AG04450 (cell line): ENCODE measurements at regions of chr5 and their contacts with region 1.

Region 1: DNA sequence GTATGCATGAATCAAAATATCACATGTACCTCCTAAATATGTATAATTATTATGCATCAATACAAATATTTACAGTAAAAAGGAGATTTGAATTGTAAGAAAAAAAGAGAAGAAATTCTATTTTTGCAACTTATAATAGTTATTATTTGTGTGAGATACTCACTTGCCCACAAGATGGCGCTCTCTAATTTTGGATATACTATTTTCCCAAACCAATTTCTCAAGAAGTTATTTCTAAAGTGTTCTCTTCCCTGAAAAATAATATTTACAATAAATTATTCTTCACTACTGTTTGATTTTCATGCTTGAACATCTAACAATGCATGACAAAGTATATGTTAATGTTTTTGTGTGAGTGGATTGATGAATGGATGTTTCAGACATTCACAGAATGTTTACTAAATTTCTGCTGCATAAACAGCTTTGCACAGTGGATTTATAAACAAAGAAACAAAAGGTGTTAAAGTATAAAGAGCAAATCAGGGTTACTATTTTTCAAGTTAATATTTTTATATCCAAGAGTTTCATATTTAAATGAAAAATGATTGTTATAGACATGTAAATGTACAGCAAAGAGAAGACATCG is 503.4 kb downstream of the PDE4D start:
- DNase-seq: no peak
- H3K4me3 ChIP-seq: no peak overlapping the region
- H3K27ac ChIP-seq: no peak overlapping the region
- H3K27me3 ChIP-seq: no peaks in the 10 kb centered on the region
- CTCF ChIP-seq: peak; percentile 67

Region 2: DNA sequence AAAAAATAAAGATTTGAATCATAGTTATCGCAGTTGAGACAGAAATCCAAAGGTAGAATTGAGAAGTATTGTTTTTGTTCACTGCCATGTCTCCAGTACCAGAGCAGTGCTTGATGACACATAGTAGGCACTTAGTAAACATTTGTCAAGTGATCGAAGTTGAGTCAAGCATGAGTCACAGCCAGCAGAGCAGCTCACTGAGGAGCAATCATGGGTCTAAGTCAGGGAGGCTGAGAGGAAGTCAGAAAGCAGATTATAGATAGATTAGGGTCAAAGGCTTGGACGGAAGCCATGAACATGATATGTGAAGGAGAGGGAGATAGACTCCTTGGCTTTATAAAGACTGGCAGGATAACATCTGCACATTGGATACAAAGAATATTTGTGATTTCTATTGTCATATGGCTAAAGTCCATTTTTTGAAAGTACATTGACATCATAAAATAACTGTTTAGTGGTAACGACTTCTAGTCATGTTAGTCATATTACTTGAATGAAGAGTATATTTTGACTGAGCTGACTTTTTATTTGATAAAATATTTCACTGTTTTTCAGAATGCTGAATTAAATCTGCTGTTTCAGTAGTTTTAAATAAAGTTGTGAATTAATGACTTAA is 638.8 kb before region 1 on chr5:
- CTCF ChIA-PET with region 1: no interaction called
- POLR2A ChIA-PET with region 1: no interaction called
- DNase-seq: no peak
- H3K4me3 ChIP-seq: no peak overlapping the region
- H3K27ac ChIP-seq: no peak overlapping the region
- H3K27me3 ChIP-seq: no peaks in the 10 kb centered on the region
- CTCF ChIP-seq: no peak

Region 3: GRCh38 chr5:59152701-59153245 is 237.4 kb before region 1 on chr5:
- CTCF ChIA-PET with region 1: no interaction called
- POLR2A ChIA-PET with region 1: no interaction called
- DNase-seq: no peak
- H3K4me3 ChIP-seq: no peak overlapping the region
- H3K27ac ChIP-seq: no peak overlapping the region
- H3K27me3 ChIP-seq: no peaks in the 10 kb centered on the region
- CTCF ChIP-seq: no peak

Region 4: GRCh38 chr5:59401637-59402036 is 11.5 kb after region 1 on chr5:
- CTCF ChIA-PET with region 1: no interaction called
- POLR2A ChIA-PET with region 1: no interaction called
- DNase-seq: no peak
- H3K4me3 ChIP-seq: no peak overlapping the region
- H3K27ac ChIP-seq: no peak overlapping the region
- H3K27me3 ChIP-seq: no peaks in the 10 kb centered on the region
- CTCF ChIP-seq: no peak

Region 5: DNA sequence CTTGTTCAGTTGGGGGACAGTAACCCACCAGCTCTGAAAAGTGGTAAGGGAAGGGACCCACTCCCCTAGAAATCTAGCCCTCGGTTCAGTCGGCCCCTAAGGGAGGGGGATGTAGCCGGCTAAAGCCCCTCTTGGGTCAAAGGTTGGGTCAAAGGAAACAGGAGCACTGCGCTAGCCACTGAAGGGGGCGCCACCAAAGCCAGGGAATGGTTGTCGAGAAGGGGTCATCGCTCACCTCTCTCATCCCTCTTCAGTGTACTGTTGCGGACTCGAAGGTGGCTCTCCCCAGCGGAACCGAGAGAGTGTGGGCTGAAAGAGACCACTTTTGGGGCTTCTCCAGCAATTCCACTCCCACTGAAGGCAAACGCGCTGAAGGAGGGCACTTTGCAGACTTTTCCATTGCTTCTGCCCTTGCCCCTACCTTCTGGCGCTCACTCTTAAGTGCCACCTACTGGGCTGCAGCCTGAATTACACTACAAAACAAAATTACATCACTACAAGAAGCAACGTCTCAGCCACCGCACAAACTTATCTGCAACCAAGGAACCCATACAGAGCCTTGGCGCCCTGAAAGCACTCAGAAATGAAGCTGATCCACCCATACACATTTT is 106.5 kb after region 1 on chr5:
- CTCF ChIA-PET with region 1: interaction called, 15 read pairs
- POLR2A ChIA-PET with region 1: no interaction called
- DNase-seq: no peak
- H3K4me3 ChIP-seq: no peak overlapping the region
- H3K27ac ChIP-seq: no peak overlapping the region
- H3K27me3 ChIP-seq: peaks cover 2% of the 10 kb centered on the region
- CTCF ChIP-seq: peak; percentile 66

Region 6: DNA sequence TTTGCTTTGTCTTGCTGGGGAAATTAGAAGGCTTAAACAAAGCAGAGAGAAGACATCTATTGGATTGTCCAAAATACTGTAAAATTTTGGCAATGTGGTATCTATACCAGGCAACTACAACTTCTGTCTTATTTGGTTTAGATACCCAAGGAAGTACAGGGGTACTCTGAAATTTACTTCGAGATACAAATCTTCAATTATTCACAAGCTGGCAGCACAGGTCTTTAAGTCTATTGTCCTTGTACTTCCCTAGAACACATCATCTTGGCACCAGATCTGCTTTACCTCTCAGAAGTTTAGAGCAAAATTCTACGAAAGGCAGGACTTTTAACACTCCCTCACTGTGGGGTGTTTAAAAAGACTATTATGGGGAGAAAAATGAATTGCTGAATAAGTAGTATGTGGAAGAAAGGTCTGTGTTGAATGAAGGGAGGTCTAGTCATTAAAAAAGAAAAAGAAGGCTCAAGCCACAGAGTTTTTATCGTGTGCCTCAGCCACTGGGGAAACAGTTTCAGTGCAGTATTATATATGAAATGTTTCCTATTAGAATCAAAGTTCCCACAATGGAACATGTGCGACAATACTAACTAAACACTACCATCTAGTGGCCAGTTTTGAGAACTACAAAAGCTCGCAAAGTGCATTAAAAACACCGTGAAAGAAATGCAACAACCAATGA is 409.6 kb after region 1 on chr5:
- CTCF ChIA-PET with region 1: interaction called, 43 read pairs
- POLR2A ChIA-PET with region 1: no interaction called
- DNase-seq: no peak
- H3K4me3 ChIP-seq: no peak overlapping the region
- H3K27ac ChIP-seq: no peak overlapping the region
- H3K27me3 ChIP-seq: no peaks in the 10 kb centered on the region
- CTCF ChIP-seq: peak; percentile 72